GM12878 (cell line): ENCODE measurements at regions of chr2 and their contacts with region 1.

Region 1: DNA sequence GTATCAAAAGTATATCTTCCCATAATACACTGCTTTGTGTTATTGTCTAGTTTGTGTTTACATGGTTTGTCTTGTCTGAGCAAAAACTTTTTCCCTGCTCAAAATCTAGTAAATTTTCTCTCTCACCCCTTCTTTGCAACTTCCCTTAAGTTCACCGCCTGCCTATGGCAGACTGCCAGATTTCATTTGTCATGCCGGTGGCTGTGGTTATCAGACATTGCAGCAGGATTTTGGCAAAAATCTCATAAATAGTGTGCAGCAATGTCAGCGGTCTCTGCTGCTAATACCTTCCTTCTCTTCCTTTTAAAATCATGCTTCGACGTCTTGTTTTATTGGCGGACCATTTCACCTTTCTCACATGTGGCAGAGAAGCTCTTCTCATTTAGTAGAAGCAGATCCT is 45.6 kb upstream of the TMEM178A start:
- DNase-seq: no peak
- ATAC-seq: no peak
- H3K4me3 ChIP-seq: no peak overlapping the region
- H3K27ac ChIP-seq: no peak overlapping the region
- H3K4me1 ChIP-seq: no peaks in the 10 kb centered on the region
- H3K27me3 ChIP-seq: no peaks in the 10 kb centered on the region; a peak in 2 of 4 replicates
- CTCF ChIP-seq: no peak
- EP300 ChIP-seq: no peak
- POLR2A ChIP-seq: no peak
- RAD21 ChIP-seq: no peak

Region 2: GRCh38 chr2:39568561-39569006 is 51.5 kb before region 1 on chr2:
- CTCF ChIA-PET with region 1: no interaction called
- POLR2A ChIA-PET with region 1: no interaction called
- RAD21 ChIA-PET with region 1: no interaction called
- SMC1A ChIA-PET with region 1: no interaction called
- in situ Hi-C with region 1: no loop called
- intact Hi-C with region 1: loop called (anchors 10 kb)
- DNase-seq: no peak
- ATAC-seq: no peak
- H3K4me3 ChIP-seq: no peak overlapping the region
- H3K27ac ChIP-seq: no peak overlapping the region
- H3K4me1 ChIP-seq: no peaks in the 10 kb centered on the region
- H3K27me3 ChIP-seq: 0 out of 4 replicates have a peak, but pooled peaks cover 0 to 2% of the 10 kb centered on the region in 2 experiments
- CTCF ChIP-seq: no peak
- EP300 ChIP-seq: no peak
- POLR2A ChIP-seq: no peak
- RAD21 ChIP-seq: no peak

Region 3: GRCh38 chr2:39584283-39584965 is 35.6 kb before region 1 on chr2:
- CTCF ChIA-PET with region 1: no interaction called
- POLR2A ChIA-PET with region 1: no interaction called
- RAD21 ChIA-PET with region 1: no interaction called
- SMC1A ChIA-PET with region 1: no interaction called
- in situ Hi-C with region 1: no loop called
- intact Hi-C with region 1: no loop called
- DNase-seq: no peak
- ATAC-seq: no peak
- H3K4me3 ChIP-seq: no peak overlapping the region
- H3K27ac ChIP-seq: no peak overlapping the region
- H3K4me1 ChIP-seq: no peaks in the 10 kb centered on the region
- H3K27me3 ChIP-seq: no peaks in the 10 kb centered on the region; a peak in 1 of 4 replicates
- CTCF ChIP-seq: no peak
- EP300 ChIP-seq: no peak
- POLR2A ChIP-seq: no peak
- RAD21 ChIP-seq: no peak